ENCODE measurements at regions of chr2 and their contacts with region 1.

Region 1: DNA sequence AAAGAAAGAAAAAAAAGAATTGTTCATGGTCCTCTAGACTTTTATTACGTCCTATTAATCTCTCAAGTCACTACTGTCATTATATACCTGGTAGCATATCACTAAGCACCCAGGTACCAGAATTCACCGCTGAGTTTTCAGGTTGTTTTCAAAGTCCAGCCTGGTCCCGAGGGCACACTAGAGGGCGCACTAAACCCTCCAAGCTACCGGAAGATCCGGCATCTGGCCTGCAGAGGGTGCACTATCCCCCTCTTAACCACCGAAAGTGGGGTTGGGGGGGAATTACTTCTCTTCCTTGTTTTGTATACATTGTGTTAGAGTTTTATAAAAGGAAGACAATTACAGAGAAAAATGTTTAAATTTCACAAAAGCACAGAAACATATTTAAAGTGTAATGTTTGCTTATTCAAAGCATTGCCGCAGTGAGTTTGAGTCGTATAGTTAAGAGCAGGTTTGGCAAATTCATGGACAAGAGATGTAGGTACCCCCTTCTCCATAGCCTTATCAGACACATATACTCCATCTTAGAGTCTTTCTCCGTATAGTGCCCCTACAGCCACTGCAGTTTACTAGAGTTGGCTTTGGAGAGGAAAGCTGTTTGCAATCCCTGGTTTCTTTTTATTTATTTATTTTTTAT is 19.2 kb downstream of the MOGAT1 start:
- DNase-seq: peak; percentile 62
- H3K4me3 ChIP-seq: no peak overlapping the region
- H3K27ac ChIP-seq: no peak overlapping the region
- H3K4me1 ChIP-seq: peaks cover 21% of the 10 kb centered on the region
- H3K27me3 ChIP-seq: no peaks in the 10 kb centered on the region
- CTCF ChIP-seq: peak; percentile 99 to 100
- POLR2A ChIP-seq: no peak

Region 2: DNA sequence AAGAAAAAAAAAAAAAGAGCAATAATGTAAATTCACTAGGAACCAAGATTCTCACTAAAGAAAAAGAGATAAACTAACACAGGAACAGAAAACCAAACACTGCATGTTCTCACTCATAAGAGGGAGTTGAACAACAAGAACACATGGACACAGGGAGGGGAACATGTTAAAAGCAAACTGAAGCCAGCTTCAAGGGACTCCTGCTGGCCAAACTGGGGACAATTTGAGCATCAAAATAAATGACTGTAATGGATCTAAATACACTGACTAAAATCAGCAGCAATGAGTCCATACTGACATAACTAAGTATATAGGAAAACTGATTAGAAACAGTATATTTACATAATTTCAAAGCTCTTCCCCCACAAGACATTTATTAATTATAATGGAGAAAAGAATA is 107.8 kb before region 1 on chr2:
- CTCF ChIA-PET with region 1: no interaction called
- POLR2A ChIA-PET with region 1: no interaction called
- dilution Hi-C with region 1: no loop called
- intact Hi-C with region 1: no loop called
- DNase-seq: no peak
- H3K4me3 ChIP-seq: no peak overlapping the region
- H3K27ac ChIP-seq: no peak overlapping the region
- H3K4me1 ChIP-seq: no peaks in the 10 kb centered on the region
- H3K27me3 ChIP-seq: no peaks in the 10 kb centered on the region
- CTCF ChIP-seq: no peak
- POLR2A ChIP-seq: no peak

Region 3: GRCh38 chr2:222677981-222678380 is 12.7 kb before region 1 on chr2:
- CTCF ChIA-PET with region 1: interaction called, 13 read pairs
- POLR2A ChIA-PET with region 1: no interaction called
- dilution Hi-C with region 1: no loop called
- intact Hi-C with region 1: no loop called
- DNase-seq: no peak
- H3K4me3 ChIP-seq: no peak overlapping the region
- H3K27ac ChIP-seq: no peak overlapping the region
- H3K4me1 ChIP-seq: no peaks in the 10 kb centered on the region
- H3K27me3 ChIP-seq: peaks cover 24 to 29% of the 10 kb centered on the region in 2 experiments
- CTCF ChIP-seq: no peak
- POLR2A ChIP-seq: no peak

Region 4: GRCh38 chr2:222797261-222797660 is 106.6 kb after region 1 on chr2:
- CTCF ChIA-PET with region 1: interaction called, 11 read pairs
- POLR2A ChIA-PET with region 1: no interaction called
- dilution Hi-C with region 1: no loop called
- intact Hi-C with region 1: loop called (anchors 2 kb)
- DNase-seq: peak; percentile 48
- H3K4me3 ChIP-seq: no peak overlapping the region
- H3K27ac ChIP-seq: no peak overlapping the region
- H3K4me1 ChIP-seq: peaks cover 2% of the 10 kb centered on the region
- H3K27me3 ChIP-seq: peaks cover 0 to 2% of the 10 kb centered on the region in 2 experiments
- CTCF ChIP-seq: peak; percentile 30 to 43
- POLR2A ChIP-seq: no peak

Region 5: GRCh38 chr2:222860740-222861410 is 170.2 kb after region 1 on chr2 and contains the start of gene ACSL3:
- CTCF ChIA-PET with region 1: interaction called, 17 read pairs
- POLR2A ChIA-PET with region 1: no interaction called
- dilution Hi-C with region 1: no loop called
- intact Hi-C with region 1: loop called (anchors 2 kb)
- DNase-seq: peak; percentile 96
- H3K4me3 ChIP-seq: peak within 1 kb of the TSS; percentile 72 to 94 (median 92)
- H3K27ac ChIP-seq: peak within 1 kb of the TSS; percentile 89
- H3K4me1 ChIP-seq: peaks cover 38% of the 10 kb centered on the region
- H3K27me3 ChIP-seq: no peaks in the 10 kb centered on the region
- CTCF ChIP-seq: peak in 1 of 2 donors; percentile 1
- POLR2A ChIP-seq: peak; percentile 99
- total RNA-seq, gene ACSL3: 139 and 142 TPM in 2 replicates

Region 6: DNA sequence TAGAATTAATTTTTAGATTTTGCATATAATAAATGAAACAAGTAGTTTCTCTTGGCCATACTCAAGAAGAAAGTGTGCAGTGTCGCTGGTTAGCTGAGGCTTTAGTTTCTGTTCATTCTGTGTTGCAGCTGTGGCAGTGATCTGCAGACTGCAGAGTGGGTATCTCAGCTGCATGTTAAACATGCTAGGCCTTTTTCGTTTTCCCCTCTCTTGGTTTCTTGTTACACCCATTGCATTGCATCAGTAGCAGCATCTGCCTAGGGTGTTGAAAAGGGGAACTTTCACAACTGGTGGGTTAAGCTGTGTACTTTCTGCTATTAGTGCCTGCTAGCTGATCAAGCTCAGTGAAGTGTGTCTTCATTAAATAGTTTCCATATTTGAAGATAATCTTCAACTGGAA is 221.4 kb after region 1 on chr2:
- CTCF ChIA-PET with region 1: interaction called, 10 read pairs
- POLR2A ChIA-PET with region 1: no interaction called
- dilution Hi-C with region 1: no loop called
- intact Hi-C with region 1: no loop called
- DNase-seq: no peak
- H3K4me3 ChIP-seq: no peak overlapping the region
- H3K27ac ChIP-seq: no peak overlapping the region
- H3K4me1 ChIP-seq: no peaks in the 10 kb centered on the region
- H3K27me3 ChIP-seq: no peaks in the 10 kb centered on the region
- CTCF ChIP-seq: no peak
- POLR2A ChIP-seq: no peak

Region 7: DNA sequence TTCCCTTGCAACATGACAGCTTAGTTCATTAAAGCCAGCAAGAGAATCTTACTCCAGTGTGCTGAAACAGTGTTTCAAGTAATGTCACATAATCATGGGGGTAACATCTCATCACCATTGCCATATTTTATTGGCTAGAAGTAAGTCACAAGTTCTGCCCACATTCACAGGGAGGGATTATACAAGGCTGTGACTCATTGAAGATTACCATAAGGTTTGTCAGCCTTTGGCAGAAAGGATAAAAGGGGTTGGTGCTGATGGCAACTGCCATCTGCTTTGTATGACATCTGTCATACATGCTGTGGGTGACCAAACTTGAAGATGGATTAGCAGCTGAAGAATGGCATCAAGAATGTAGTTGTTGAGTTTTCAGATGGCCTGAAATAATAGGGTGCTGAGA is 422.5 kb after region 1 on chr2:
- CTCF ChIA-PET with region 1: no interaction called
- POLR2A ChIA-PET with region 1: no interaction called
- dilution Hi-C with region 1: no loop called
- intact Hi-C with region 1: loop called (anchors 5 kb)
- DNase-seq: peak; percentile 14
- H3K4me3 ChIP-seq: no peak overlapping the region
- H3K27ac ChIP-seq: no peak overlapping the region
- H3K4me1 ChIP-seq: peaks cover 18% of the 10 kb centered on the region
- H3K27me3 ChIP-seq: no peaks in the 10 kb centered on the region
- CTCF ChIP-seq: no peak
- POLR2A ChIP-seq: no peak

Measured in endothelial cell of umbilical vein (primary cell).